ENCODE measurements at regions of chr17 and their contacts with region 1.

Region 1: DNA sequence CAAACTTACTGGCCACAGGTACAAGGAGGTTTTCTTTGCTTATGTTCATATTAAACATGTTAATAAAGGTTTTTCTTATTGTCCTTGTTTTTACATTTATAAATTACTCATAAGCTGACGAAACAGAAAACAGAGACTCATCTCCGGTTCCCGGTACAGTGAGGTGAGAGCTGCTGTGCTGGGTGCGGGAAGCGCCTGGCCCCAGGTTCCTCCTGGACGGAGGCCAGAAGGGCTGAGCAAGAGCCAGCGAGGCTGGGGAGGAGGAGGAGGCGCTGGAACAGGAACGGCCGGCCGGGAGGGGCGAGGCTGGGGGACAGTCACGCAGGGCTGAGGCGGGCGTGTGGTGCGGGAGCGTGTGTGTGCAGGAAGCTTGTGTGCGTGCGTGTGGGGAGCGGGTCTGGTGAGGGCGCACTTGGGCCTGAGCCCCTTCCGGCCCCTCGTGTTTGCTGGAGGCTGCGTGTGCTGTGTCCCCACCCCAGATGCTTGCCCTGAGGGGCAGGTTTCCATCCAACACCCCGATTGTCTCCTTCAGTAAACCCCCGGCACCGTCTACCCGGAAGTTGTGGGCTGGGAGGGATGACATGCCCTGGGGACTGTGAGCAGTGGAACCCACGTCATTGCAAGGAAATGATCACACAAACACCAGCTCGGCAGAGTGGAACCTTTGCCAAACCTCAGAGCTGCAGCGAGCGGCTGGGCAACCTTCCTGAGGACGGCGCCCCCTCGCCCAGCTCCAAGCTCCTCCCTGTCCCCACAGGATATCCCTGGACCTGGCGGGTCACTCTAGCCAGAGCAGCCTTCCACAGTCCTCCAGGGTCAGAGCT is 19.5 kb downstream of the CD7 start:
- DNase-seq: peak; percentile 94 to 99 (median 95)
- H3K4me3 ChIP-seq: peak overlapping the region; percentile 21 to 81
- H3K4me3 Mint-ChIP-seq: peak overlapping the region; percentile 96 to 98 (median 97)
- H3K27ac ChIP-seq: peak overlapping the region; percentile 100
- H3K27ac Mint-ChIP-seq: peak overlapping the region; percentile 100
- H3K4me1 ChIP-seq: peaks cover 68% of the 10 kb centered on the region
- H3K4me1 Mint-ChIP-seq: peaks cover 46 to 91% (median 72%) of the 10 kb centered on the region in 4 donors
- H3K27me3 ChIP-seq: no peaks in the 10 kb centered on the region
- H3K27me3 Mint-ChIP-seq: no peaks in the 10 kb centered on the region

Region 2: GRCh38 chr17:82030470-82031302 is 267.2 kb before region 1 on chr17:
- CTCF ChIA-PET with region 1: interaction called, 12 read pairs
- POLR2A ChIA-PET with region 1: interaction called, 3 read pairs
- intact Hi-C with region 1: no loop called
- DNase-seq: peak; percentile 78 to 88 (median 85)
- H3K4me3 ChIP-seq: peak overlapping the region in 1 of 2 donors; percentile 46
- H3K4me3 Mint-ChIP-seq: peak overlapping the region; percentile 79 to 89 (median 86)
- H3K27ac ChIP-seq: no peak overlapping the region
- H3K27ac Mint-ChIP-seq: peak overlapping the region in 6 of 7 donors; percentile 48 to 91 (median 76)
- H3K4me1 ChIP-seq: peaks cover 13% of the 10 kb centered on the region
- H3K4me1 Mint-ChIP-seq: peaks cover 5 to 14% (median 10%) of the 10 kb centered on the region in 4 donors
- H3K27me3 ChIP-seq: no peaks in the 10 kb centered on the region
- H3K27me3 Mint-ChIP-seq: no peaks in the 10 kb centered on the region

Region 3: DNA sequence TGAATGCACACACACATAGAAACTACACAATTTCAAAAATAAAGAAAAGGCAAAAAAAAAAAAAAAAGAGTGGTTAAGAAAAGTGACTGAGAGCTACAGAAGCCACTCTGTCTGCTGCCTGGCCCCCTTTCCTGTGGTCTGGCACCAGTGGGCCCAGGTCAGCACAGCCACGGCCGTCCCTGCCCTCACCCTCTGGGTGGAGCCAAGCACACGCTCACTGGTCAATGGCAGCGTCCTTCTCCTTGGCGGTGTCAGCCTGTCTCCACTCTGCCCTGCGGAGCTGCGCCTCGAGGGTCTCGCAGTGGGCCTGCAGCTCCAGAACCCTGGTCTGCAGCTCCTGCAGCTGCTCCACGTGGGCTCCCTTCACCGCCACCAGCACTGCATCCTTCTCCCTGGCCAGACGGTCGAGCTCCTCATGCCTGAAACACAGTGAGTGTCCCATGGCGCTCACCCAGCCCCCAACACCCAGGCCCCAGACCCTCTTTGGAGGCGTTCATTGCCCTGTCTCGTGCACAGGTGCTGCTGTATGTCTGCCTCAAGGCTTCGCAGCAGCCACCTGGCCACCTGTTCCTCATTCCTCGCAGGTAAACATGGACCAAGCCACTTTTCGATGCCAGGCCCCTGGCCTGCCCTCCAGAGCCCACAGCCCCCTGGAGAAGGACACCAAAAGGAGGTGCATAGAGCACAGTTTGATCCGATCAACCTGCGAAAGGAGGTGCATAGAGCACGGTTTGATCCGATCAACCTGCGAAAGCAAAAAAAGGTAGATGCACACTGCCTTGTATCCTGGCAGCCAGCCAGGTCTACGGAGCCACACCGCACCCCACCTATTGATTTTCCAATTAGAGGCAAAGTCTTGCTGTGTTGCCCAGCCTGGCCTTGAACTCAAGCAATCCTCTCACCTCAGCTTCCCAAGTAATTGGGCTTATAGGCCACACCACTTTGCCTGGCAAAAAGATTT is 109.6 kb before region 1 on chr17:
- CTCF ChIA-PET with region 1: no interaction called
- POLR2A ChIA-PET with region 1: no interaction called
- intact Hi-C with region 1: no loop called
- DNase-seq: no peak
- H3K4me3 ChIP-seq: no peak overlapping the region
- H3K4me3 Mint-ChIP-seq: no peak overlapping the region
- H3K27ac ChIP-seq: no peak overlapping the region
- H3K27ac Mint-ChIP-seq: no peak overlapping the region
- H3K4me1 ChIP-seq: no peaks in the 10 kb centered on the region
- H3K4me1 Mint-ChIP-seq: no peaks in the 10 kb centered on the region
- H3K27me3 ChIP-seq: no peaks in the 10 kb centered on the region
- H3K27me3 Mint-ChIP-seq: no peaks in the 10 kb centered on the region

Region 4: DNA sequence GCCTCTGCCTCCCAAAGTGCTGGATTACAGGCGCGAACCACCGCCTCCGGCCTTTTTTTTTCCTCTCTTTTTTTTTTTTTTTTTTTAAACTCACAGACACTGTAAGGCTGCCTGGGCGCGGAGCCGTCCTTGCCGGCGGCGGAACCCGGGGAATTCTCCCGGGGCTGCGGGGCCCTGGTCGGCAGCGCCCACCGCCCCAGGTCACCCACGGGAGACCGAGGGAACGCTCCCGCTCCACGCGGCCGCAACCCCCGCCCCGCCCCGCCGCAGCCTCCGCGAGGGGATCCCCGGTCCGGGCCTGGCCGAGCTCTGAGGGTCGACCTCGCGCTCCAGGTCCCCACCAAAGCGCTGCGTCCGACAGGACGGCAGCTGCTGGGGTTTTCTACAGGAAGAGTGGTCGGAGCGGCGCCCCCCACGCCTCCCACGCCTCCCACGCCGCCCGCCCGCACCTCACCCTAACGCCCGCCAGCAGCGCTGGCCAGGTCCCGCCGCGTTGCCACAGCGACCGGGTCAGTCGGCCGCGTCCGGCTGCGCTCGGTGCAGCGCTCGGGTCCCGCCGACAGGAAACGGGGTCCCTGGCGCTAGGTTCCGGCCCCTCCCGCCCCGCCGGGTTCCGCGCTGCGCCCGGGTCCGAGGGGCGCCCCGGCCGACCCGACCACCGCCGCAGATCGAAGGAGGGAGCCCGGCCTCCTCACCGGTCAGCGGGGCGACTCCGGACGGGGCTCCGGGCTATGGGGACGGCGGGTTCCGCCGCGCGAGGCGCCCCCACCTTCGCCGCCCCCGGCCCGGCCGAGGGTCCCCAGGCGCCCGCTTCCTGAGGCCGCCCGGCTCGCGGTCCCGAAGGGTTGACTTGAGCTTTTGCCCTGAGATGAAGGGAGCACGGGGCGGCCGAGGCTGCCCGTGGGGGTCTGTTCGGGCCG is 85.3 kb before region 1 on chr17 and contains the start of gene CCDC57:
- CTCF ChIA-PET with region 1: interaction called, 3 read pairs
- POLR2A ChIA-PET with region 1: interaction called, 26 read pairs
- intact Hi-C with region 1: loop called (anchors 5 kb)
- DNase-seq: peak in 4 of 5 donors; percentile 33 to 55 (median 44)
- H3K4me3 ChIP-seq: peak within 1 kb of the TSS; percentile 3 to 64
- H3K4me3 Mint-ChIP-seq: peak within 1 kb of the TSS; percentile 85 to 94 (median 88)
- H3K27ac ChIP-seq: peak within 1 kb of the TSS; percentile 58
- H3K27ac Mint-ChIP-seq: peak within 1 kb of the TSS; percentile 8 to 98 (median 91)
- H3K4me1 ChIP-seq: peaks cover 49% of the 10 kb centered on the region
- H3K4me1 Mint-ChIP-seq: peaks cover 12 to 40% (median 29%) of the 10 kb centered on the region in 4 donors
- H3K27me3 ChIP-seq: no peaks in the 10 kb centered on the region
- H3K27me3 Mint-ChIP-seq: no peaks in the 10 kb centered on the region
- total RNA-seq, gene CCDC57: 80.5 to 88.7 TPM

Region 5: GRCh38 chr17:82236142-82236981 is 61.6 kb before region 1 on chr17:
- CTCF ChIA-PET with region 1: interaction called, 28 read pairs
- POLR2A ChIA-PET with region 1: interaction called, 56 read pairs
- intact Hi-C with region 1: loop called (anchors 1 kb)
- DNase-seq: peak; percentile 69 to 74 (median 72)
- H3K4me3 ChIP-seq: no peak overlapping the region
- H3K4me3 Mint-ChIP-seq: peak overlapping the region in 1 of 8 donors; percentile 35
- H3K27ac ChIP-seq: peak overlapping the region; percentile 15
- H3K27ac Mint-ChIP-seq: peak overlapping the region in 5 of 7 donors; percentile 41 to 67 (median 64)
- H3K4me1 ChIP-seq: peaks cover 63% of the 10 kb centered on the region
- H3K4me1 Mint-ChIP-seq: peaks cover 10 to 58% (median 39%) of the 10 kb centered on the region in 4 donors
- H3K27me3 ChIP-seq: no peaks in the 10 kb centered on the region
- H3K27me3 Mint-ChIP-seq: no peaks in the 10 kb centered on the region

Region 6: GRCh38 chr17:82283208-82283749 is 14.6 kb before region 1 on chr17:
- CTCF ChIA-PET with region 1: interaction called, 6 read pairs
- POLR2A ChIA-PET with region 1: interaction called, 13 read pairs
- intact Hi-C with region 1: no loop called
- DNase-seq: no peak
- H3K4me3 ChIP-seq: no peak overlapping the region
- H3K4me3 Mint-ChIP-seq: no peak overlapping the region
- H3K27ac ChIP-seq: no peak overlapping the region
- H3K27ac Mint-ChIP-seq: no peak overlapping the region
- H3K4me1 ChIP-seq: peaks cover 23% of the 10 kb centered on the region
- H3K4me1 Mint-ChIP-seq: peaks cover 8 to 13% (median 11%) of the 10 kb centered on the region in 4 donors
- H3K27me3 ChIP-seq: no peaks in the 10 kb centered on the region
- H3K27me3 Mint-ChIP-seq: no peaks in the 10 kb centered on the region

Region 7: DNA sequence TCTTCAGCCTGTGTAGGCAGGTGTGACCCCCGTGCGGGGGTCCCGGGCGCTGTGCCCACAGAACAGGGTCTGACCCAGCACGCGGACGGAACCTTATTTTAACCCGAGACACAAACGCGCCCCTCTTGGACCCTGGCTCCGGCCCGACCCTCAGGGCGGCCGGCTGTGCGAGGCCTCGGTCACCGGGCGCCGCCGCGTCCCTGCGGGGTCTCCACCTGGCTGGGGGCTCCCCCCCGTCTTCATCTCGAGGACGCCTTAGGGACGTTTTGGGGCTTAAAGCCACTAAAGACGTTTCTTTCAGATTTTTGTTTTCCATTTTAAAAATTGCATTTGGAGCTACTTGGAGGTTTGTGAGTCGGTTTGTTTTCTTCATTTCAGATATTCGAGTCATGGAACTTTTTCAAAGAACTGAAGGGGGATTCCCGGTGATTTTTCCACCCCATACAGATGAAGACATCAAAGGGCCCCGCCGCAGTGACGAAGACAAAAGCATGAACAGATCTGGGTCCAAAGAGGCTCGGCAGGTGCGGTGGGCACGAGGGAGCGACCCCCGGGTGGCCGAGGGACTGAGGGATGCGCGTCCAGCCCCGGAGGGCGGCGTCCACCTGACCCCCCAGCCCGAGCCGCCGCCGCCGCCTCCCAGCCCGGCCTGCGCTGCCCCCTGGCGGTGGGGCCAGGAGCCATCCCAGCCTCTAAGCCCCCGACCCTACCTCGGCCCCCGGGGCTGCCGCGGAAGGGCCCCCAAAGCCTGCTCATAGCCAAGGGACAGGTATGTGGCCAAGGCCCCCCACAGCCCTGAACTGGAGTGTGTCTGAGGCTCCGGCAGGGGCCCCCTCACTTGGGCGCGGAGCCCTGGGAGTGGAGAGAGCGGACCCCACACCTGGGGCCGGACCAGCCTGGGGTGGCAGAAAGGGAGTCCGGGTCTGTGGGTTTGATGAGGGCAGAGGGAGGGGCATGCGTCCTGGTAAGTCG is 23.3 kb after region 1 on chr17:
- CTCF ChIA-PET with region 1: interaction called, 72 read pairs
- POLR2A ChIA-PET with region 1: interaction called, 172 read pairs
- intact Hi-C with region 1: loop called (anchors 1 kb)
- DNase-seq: peak; percentile 79 to 96 (median 83)
- H3K4me3 ChIP-seq: peak overlapping the region in 1 of 2 donors; percentile 47
- H3K4me3 Mint-ChIP-seq: peak overlapping the region; percentile 60 to 88 (median 82)
- H3K27ac ChIP-seq: peak overlapping the region; percentile 66
- H3K27ac Mint-ChIP-seq: peak overlapping the region in 6 of 7 donors; percentile 86 to 96 (median 94)
- H3K4me1 ChIP-seq: peaks cover 41% of the 10 kb centered on the region
- H3K4me1 Mint-ChIP-seq: peaks cover 9 to 31% (median 21%) of the 10 kb centered on the region in 4 donors
- H3K27me3 ChIP-seq: no peaks in the 10 kb centered on the region
- H3K27me3 Mint-ChIP-seq: peaks cover 0 to 2% of the 10 kb centered on the region in 2 donors